ENCODE measurements at regions of chr6 and their contacts with region 1.

Region 1: DNA sequence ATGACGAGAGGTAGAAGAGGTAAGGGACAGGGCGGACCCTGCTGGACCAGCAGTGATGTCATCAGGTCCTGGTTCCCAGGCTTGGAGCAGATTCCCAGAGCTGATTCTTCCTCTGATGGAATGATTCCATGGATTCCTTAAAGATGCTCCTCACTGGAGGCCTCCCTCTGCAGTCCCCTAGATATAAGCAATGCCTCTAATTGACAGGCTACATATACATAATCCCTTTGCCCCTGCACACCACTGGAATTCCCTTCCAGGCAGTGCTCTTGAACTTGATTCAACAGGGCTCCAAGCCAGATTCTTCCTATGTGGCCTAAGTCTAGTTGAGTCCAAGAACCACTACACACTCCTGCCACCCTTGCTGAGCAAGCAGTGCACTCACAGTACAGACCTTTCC is 52.3 kb upstream of the L3MBTL3 start:
- DNase-seq: no peak
- H3K4me3 ChIP-seq: no peak overlapping the region
- H3K27ac ChIP-seq: no peak overlapping the region
- H3K4me1 ChIP-seq: no peaks in the 10 kb centered on the region
- H3K27me3 ChIP-seq: no peaks in the 10 kb centered on the region
- CTCF ChIP-seq: no peak
- POLR2A ChIP-seq: no peak

Region 2: GRCh38 chr6:129908858-129909257 is 57.3 kb before region 1 on chr6:
- intact Hi-C with region 1: no loop called
- DNase-seq: no peak
- H3K4me3 ChIP-seq: no peak overlapping the region
- H3K27ac ChIP-seq: no peak overlapping the region
- H3K4me1 ChIP-seq: no peaks in the 10 kb centered on the region
- H3K27me3 ChIP-seq: no peaks in the 10 kb centered on the region
- CTCF ChIP-seq: no peak
- POLR2A ChIP-seq: no peak

Region 3: GRCh38 chr6:129981598-129981997 is 15.5 kb after region 1 on chr6:
- intact Hi-C with region 1: loop called (anchors 1 kb)
- DNase-seq: no peak
- H3K4me3 ChIP-seq: no peak overlapping the region
- H3K27ac ChIP-seq: no peak overlapping the region
- H3K4me1 ChIP-seq: no peaks in the 10 kb centered on the region
- H3K27me3 ChIP-seq: no peaks in the 10 kb centered on the region
- CTCF ChIP-seq: no peak
- POLR2A ChIP-seq: no peak